Common myeloid progenitor, CD34-positive (primary cell): ENCODE measurements at regions of chr11 and their contacts with region 1.

Region 1: DNA sequence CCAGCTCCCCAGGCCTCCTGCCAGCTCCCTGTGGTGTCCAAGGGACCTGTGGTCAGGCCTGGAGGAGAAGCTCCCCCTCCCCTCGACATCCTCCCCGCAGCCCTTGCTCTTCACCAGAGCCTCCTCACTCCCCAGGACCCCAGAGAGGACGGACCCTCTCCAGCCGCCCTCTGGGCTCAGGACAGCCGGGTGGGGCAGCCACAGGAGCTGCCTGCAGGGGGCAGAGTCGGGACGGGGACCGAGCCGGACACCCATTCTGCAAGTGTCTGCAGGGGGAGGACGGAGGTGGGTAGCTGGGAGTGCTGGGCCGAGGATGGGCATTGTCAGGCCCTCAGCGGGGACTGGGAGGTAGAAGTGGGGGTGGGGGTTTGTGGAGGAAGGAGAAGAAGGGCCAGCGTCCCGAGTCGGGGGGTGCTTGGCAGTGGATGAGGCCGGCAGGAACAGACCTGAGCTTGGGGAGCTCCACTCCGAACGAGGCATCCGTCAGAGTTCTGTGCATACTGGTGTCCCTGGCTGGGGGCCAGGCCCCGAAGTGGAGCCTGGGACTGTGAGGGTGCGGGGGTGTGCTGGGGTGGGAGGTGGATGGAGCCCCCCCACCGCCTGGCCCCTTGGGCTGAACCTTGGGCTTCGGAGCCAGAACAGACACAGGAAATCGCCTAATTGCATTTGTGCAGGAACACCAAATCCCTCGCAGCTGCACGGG is 15.2 kb downstream of the PRR33 start:
- DNase-seq: peak in 2 of 3 donors; percentile 41 to 42
- H3K4me3 ChIP-seq: peak overlapping the region in 1 of 7 experiments; percentile 42
- H3K27ac ChIP-seq: no peak overlapping the region
- H3K4me1 ChIP-seq: peaks cover 0 to 55% (median 44%) of the 10 kb centered on the region in 4 experiments
- H3K27me3 ChIP-seq: no peaks in the 10 kb centered on the region

Region 2: GRCh38 chr11:1832211-1832919 is 44.1 kb before region 1 on chr11:
- CTCF ChIA-PET with region 1: interaction called, 13 read pairs
- POLR2A ChIA-PET with region 1: no interaction called
- DNase-seq: peak in 2 of 3 donors; percentile 48 to 53
- H3K4me3 ChIP-seq: no peak overlapping the region
- H3K27ac ChIP-seq: no peak overlapping the region
- H3K4me1 ChIP-seq: peaks cover 0 to 16% (median 7%) of the 10 kb centered on the region in 4 experiments
- H3K27me3 ChIP-seq: peaks cover 0 to 13% (median 2%) of the 10 kb centered on the region in 5 experiments

Region 3: DNA sequence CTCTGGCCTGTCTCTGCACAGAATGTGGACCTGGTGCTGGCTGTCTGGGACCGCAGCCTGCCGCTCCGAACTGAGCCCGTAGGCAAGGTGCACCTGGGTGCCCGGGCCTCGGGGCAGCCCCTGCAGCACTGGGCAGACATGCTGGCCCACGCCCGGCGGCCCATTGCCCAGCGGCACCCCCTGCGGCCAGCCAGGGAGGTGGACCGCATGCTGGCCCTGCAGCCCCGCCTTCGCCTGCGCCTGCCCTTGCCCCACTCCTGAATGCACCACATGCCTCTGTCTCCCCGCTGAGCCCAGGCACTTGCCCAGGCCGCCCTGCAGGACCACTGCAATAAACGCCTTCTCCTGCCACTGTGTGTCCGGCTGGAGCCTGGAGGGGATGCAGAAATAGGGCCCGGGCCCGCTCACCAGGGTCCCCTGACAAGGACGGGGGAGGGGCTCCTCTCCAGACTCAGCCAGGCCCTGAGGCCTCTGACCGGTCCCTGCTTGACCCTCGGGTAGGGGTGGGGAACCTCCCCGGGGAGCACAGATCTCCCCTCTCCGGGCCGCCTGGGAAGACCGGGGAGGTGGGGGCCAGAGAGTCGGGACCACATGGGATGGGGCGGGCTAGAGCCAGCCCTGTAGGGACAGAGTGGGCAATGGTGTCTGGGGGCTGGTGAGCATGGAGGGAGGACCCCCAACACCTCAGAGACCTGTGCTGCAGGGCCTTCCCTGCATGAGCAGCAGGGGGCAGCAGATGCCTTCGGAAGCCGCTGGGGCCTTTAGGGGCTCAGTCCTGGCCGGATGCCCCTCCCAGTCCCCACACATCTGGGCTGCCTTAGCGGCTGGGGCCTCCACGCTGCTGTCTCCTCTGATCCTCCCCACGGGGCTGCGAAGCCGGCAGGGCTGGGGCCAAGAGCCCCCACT is 39.1 kb before region 1 on chr11:
- CTCF ChIA-PET with region 1: interaction called, 13 read pairs
- POLR2A ChIA-PET with region 1: no interaction called
- DNase-seq: peak; percentile 79 to 90 (median 88)
- H3K4me3 ChIP-seq: no peak overlapping the region
- H3K27ac ChIP-seq: no peak overlapping the region
- H3K4me1 ChIP-seq: peaks cover 0 to 54% (median 38%) of the 10 kb centered on the region in 4 experiments
- H3K27me3 ChIP-seq: peaks cover 0 to 2% (median 0%) of the 10 kb centered on the region in 5 experiments

Region 4: DNA sequence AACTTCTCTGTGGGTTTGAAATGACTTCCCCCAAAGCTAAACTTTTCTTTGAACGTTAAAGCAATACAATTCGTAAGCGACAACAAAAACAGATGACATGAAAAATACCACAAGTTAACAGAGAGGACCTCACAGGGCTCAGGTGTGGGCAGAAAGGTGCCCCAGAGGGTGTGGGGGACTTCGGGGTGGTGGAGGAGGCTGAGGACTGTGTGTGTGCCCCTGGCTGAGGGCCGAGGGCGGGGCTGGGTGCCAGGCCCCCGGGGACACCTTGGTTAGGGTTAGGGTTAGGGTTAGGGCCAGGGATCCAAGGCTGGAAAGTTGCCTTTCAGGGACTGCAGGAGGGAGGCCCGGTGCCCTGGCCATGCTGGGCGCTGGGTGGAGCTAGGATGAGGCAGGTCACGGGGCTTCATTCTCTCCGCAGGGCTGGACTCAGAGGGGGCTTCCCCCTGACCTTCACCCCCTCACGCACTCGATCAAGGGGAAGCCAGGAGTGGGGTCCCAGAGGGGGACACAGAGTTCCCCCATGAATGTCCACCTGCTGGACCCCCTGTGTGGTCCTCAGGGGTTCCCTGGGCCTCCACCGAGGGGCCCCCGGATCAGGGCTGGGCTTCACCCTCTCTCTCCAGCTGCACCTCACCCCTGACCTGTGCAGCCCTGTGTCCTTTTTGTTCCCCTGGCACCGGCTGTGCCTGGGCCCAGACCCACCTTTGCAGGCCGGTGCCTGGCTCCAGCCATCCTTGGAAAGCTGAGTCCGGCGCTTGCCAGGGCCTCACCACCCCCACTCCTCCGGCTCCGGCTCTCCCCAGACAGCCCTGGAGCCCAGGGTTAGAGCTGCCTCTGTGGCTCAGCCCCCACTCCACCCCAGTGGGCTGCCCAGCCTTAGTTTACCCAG is 30.7 kb before region 1 on chr11:
- CTCF ChIA-PET with region 1: interaction called, 18 read pairs
- POLR2A ChIA-PET with region 1: no interaction called
- DNase-seq: peak in 2 of 3 donors; percentile 30 to 42
- H3K4me3 ChIP-seq: peak overlapping the region in 2 of 7 experiments; percentile 10 to 42
- H3K27ac ChIP-seq: no peak overlapping the region
- H3K4me1 ChIP-seq: peaks cover 8 to 76% (median 46%) of the 10 kb centered on the region in 4 experiments
- H3K27me3 ChIP-seq: no peaks in the 10 kb centered on the region

Region 5: DNA sequence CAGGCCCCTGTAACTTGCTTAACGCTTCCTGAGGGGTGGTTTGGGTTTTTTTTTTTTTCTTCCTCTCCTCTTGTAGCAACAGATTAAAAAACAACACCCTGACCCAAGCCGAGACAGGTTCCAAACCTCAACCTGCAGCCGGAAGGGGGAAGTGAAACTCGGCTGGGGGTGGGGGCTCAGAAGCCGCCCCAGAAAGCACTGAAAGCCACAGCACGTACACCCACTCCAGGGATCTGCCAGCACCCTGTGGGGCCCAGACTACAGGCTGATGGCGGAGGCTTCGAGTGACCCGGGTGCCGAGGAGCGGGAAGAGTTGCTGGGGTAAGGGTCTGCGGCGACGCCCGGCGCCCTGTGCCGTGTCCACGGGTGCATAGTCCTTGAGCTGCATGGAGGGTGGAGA is 23.6 kb before region 1 on chr11 and contains the start of gene LSP1:
- CTCF ChIA-PET with region 1: interaction called, 21 read pairs
- POLR2A ChIA-PET with region 1: no interaction called
- DNase-seq: peak; percentile 71 to 92 (median 89)
- H3K4me3 ChIP-seq: peak within 1 kb of the TSS; percentile 9 to 78 (median 69)
- H3K27ac ChIP-seq: peak within 1 kb of the TSS; percentile 33 to 70
- H3K4me1 ChIP-seq: peaks cover 0 to 61% (median 46%) of the 10 kb centered on the region in 4 experiments
- H3K27me3 ChIP-seq: no peaks in the 10 kb centered on the region

Region 6: GRCh38 chr11:1946812-1947484 is 70.4 kb after region 1 on chr11 and contains the start of gene MRPL23:
- CTCF ChIA-PET with region 1: interaction called, 36 read pairs
- POLR2A ChIA-PET with region 1: interaction called, 11 read pairs
- DNase-seq: no peak
- H3K4me3 ChIP-seq: no peak within 1 kb of the TSS
- H3K27ac ChIP-seq: no peak within 1 kb of the TSS
- H3K4me1 ChIP-seq: peaks cover 0 to 13% (median 9%) of the 10 kb centered on the region in 4 experiments
- H3K27me3 ChIP-seq: no peaks in the 10 kb centered on the region

Region 7: GRCh38 chr11:2002807-2003206 is 126.3 kb after region 1 on chr11:
- CTCF ChIA-PET with region 1: interaction called, 20 read pairs
- POLR2A ChIA-PET with region 1: interaction called, 3 read pairs
- DNase-seq: no peak
- H3K4me3 ChIP-seq: no peak overlapping the region
- H3K27ac ChIP-seq: no peak overlapping the region
- H3K4me1 ChIP-seq: no peaks in the 10 kb centered on the region
- H3K27me3 ChIP-seq: no peaks in the 10 kb centered on the region